Mammary epithelial cell (primary cell): ENCODE measurements at regions of chr5 and their contacts with region 1.

Region 1: GRCh38 chr5:181059297-181060230 is 19.5 kb downstream of the BTNL9 start:
- DNase-seq: no peak
- H3K4me3 ChIP-seq: no peak overlapping the region
- H3K27ac ChIP-seq: no peak overlapping the region
- H3K4me1 ChIP-seq: no peaks in the 10 kb centered on the region
- H3K27me3 ChIP-seq: peaks cover 35% of the 10 kb centered on the region
- CTCF ChIP-seq: no peak

Region 2: DNA sequence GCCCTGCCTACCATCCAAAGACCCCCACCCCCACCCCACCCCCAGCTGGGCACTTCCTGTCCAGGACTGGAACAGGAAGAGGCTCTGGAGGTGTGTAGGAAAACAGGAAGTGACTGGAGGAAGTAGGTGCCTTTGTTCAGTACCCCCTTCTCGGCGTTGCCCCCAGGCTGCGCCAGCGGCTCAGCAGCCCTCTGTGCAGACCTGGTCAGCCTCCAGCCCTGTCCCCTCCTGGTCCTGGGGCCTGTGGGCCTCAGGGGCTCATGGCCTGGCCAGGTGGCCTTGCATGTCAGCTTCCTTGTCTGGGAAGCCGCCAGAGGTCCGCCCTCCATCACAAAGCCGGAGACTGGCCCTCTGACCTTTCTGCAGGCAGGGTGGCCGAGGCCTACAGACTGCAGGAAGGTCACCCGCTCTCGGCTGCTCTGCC is 436.1 kb before region 1 on chr5:
- CTCF ChIA-PET with region 1: no interaction called
- dilution Hi-C with region 1: no loop called
- in situ Hi-C with region 1: no loop called
- intact Hi-C with region 1: no loop called
- DNase-seq: no peak
- H3K4me3 ChIP-seq: no peak overlapping the region
- H3K27ac ChIP-seq: no peak overlapping the region
- H3K4me1 ChIP-seq: peaks cover 5% of the 10 kb centered on the region
- H3K27me3 ChIP-seq: peaks cover 4% of the 10 kb centered on the region
- CTCF ChIP-seq: no peak

Region 3: GRCh38 chr5:181024245-181025064 is 35.1 kb before region 1 on chr5:
- CTCF ChIA-PET with region 1: interaction called, 8 read pairs
- dilution Hi-C with region 1: loop called (anchors 5 kb)
- in situ Hi-C with region 1: no loop called
- intact Hi-C with region 1: no loop called
- DNase-seq: peak; percentile 21
- H3K4me3 ChIP-seq: no peak overlapping the region
- H3K27ac ChIP-seq: no peak overlapping the region
- H3K4me1 ChIP-seq: no peaks in the 10 kb centered on the region
- H3K27me3 ChIP-seq: no peaks in the 10 kb centered on the region
- CTCF ChIP-seq: no peak

Region 4: GRCh38 chr5:181121659-181122561 is 62.3 kb after region 1 on chr5:
- CTCF ChIA-PET with region 1: no interaction called
- dilution Hi-C with region 1: loop called (anchors 5 kb)
- in situ Hi-C with region 1: no loop called
- intact Hi-C with region 1: no loop called
- DNase-seq: no peak
- H3K4me3 ChIP-seq: no peak overlapping the region
- H3K27ac ChIP-seq: no peak overlapping the region
- H3K4me1 ChIP-seq: peaks cover 15% of the 10 kb centered on the region
- H3K27me3 ChIP-seq: no peaks in the 10 kb centered on the region
- CTCF ChIP-seq: no peak